Cardiac septum (tissue), 1 donor: ENCODE measurements at regions of chr20 and their contacts with region 1.

Region 1: GRCh38 chr20:1313236-1313964 is 15.5 kb downstream of the SDCBP2 start:
- DNase-seq: peak; percentile 85

Region 2: DNA sequence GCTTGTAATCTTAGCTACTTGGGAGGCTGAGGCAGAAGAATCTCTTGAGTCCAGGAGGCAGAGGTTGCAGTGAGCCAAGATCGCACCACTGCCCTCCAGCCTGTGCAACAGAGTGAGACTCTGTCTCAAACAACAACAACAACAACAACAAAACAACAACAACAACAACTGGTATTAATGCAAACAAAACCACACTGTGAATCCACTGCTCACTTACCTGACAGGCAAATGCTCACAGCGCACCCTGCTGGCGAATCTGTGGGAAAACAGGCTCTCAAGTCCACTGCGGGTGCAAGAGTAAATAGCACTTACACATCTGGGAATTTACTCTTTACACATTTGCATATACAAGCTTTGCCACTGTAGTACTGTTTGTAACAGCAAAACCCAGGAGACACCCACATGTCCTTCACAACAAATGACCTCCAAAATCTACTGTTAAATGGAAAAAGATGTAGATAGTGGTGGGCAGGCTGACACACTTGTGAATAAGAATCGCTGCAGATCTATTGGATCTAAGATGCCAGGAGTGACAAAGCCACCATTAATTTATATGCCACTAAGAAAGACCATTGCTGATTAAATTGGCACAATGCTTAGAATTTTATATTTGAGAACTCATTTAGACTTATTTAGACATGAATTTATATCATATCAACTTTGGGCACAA is 124.0 kb after region 1 on chr20:
- intact Hi-C with region 1: loop called (anchors 1 kb)
- DNase-seq: peak; percentile 89